Sigmoid colon (tissue), 7 donors: ENCODE measurements at regions of chr3 and their contacts with region 1.

Region 1: DNA sequence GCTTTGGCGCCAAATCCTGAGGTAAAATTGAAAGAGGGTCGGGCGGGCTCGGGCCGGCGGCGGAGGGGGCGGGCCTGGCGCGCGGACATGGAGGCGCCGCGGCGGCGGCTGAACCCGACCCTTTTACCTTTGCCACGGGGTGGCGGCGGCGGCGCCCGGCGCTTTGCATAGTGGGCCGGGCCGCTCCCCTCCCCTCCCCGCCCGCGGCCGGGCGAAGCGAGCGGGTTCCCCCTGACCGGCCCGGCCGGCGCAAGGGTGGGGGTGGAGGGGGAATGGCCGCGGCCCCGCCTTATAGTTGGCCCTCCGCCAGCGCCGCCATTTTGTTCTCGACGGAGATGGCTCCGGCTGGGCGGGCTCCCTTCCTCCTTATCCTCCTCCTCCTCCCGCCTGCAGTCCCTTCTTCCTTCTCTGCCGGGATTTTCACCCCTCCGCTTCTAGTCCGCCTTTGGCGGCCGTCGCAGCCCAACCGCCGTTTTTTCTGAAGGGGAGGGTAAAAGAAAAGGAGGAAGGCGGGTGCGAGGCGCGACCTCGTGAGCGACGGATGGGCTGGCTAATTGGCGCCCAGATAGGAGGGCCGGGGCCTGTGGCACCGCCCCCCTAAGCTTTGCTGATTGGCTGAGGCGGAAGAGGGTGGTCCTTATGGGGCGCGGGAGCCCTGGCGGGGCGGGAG is 638 bp downstream of the NR2C2 start:
- DNase-seq: peak; percentile 98
- H3K4me3 ChIP-seq: peak overlapping the region; percentile 52 to 99 (median 88)
- H3K27ac ChIP-seq: peak overlapping the region; percentile 92 to 100 (median 96)
- H3K4me1 ChIP-seq: peaks cover 0 to 54% (median 39%) of the 10 kb centered on the region in 4 donors
- H3K27me3 ChIP-seq: no peaks in the 10 kb centered on the region
- CTCF ChIP-seq: no peak
- EP300 ChIP-seq: no peak
- POLR2A ChIP-seq: no peak

Region 2: GRCh38 chr3:14124615-14125190 is 823.3 kb before region 1 on chr3 and contains the starts of genes CHCHD4 and TMEM43:
- intact Hi-C with region 1: loop called (anchors 10 kb)
- DNase-seq: peak; percentile 100
- H3K4me3 ChIP-seq: peak within 1 kb of the TSS; percentile 68 to 96 (median 87)
- H3K27ac ChIP-seq: peak within 1 kb of the TSS; percentile 86 to 97 (median 94)
- H3K4me1 ChIP-seq: peaks cover 0 to 49% (median 38%) of the 10 kb centered on the region in 4 donors
- H3K27me3 ChIP-seq: no peaks in the 10 kb centered on the region
- CTCF ChIP-seq: no peak
- EP300 ChIP-seq: peak in 1 of 4 donors; percentile 53
- POLR2A ChIP-seq: peak; percentile 62 to 71
- total RNA-seq, gene CHCHD4: 13.0 to 33.1 (median 26.3) TPM
- total RNA-seq, gene TMEM43: 68.0 to 88.3 (median 80.2) TPM

Region 3: GRCh38 chr3:14178247-14179113 is 769.5 kb before region 1 on chr3 and contains the starts of genes LSM3 and XPC:
- intact Hi-C with region 1: loop called (anchors 10 kb)
- DNase-seq: peak; percentile 99
- H3K4me3 ChIP-seq: peak within 1 kb of the TSS; percentile 62 to 89 (median 76)
- H3K27ac ChIP-seq: peak within 1 kb of the TSS; percentile 89 to 99 (median 96)
- H3K4me1 ChIP-seq: peaks cover 0 to 32% (median 29%) of the 10 kb centered on the region in 4 donors
- H3K27me3 ChIP-seq: no peaks in the 10 kb centered on the region
- CTCF ChIP-seq: no peak
- EP300 ChIP-seq: peak in 1 of 4 donors; percentile 86
- POLR2A ChIP-seq: peak; percentile 85 to 91
- total RNA-seq, gene LSM3: 8.0 to 17.1 (median 14.9) TPM
- total RNA-seq, gene XPC: 30.3 to 37.5 (median 32.6) TPM

Region 4: GRCh38 chr3:14329116-14329830 is 618.7 kb before region 1 on chr3:
- intact Hi-C with region 1: no loop called
- DNase-seq: no peak
- H3K4me3 ChIP-seq: no peak overlapping the region
- H3K27ac ChIP-seq: no peak overlapping the region
- H3K4me1 ChIP-seq: no peaks in the 10 kb centered on the region
- H3K27me3 ChIP-seq: no peaks in the 10 kb centered on the region
- CTCF ChIP-seq: no peak
- EP300 ChIP-seq: no peak
- POLR2A ChIP-seq: no peak

Region 5: GRCh38 chr3:14570089-14570488 is 377.9 kb before region 1 on chr3:
- intact Hi-C with region 1: no loop called
- DNase-seq: no peak
- H3K4me3 ChIP-seq: no peak overlapping the region
- H3K27ac ChIP-seq: no peak overlapping the region
- H3K4me1 ChIP-seq: no peaks in the 10 kb centered on the region
- H3K27me3 ChIP-seq: peaks cover 0 to 10% (median 0%) of the 10 kb centered on the region in 3 donors
- CTCF ChIP-seq: no peak
- EP300 ChIP-seq: no peak
- POLR2A ChIP-seq: no peak

Region 6: GRCh38 chr3:15064835-15065549 is 117.0 kb after region 1 on chr3 and contains the start of gene MRPS25:
- intact Hi-C with region 1: loop called (anchors 2 kb)
- DNase-seq: peak; percentile 95
- H3K4me3 ChIP-seq: peak within 1 kb of the TSS; percentile 64 to 76 (median 69)
- H3K27ac ChIP-seq: peak within 1 kb of the TSS; percentile 80 to 86 (median 84)
- H3K4me1 ChIP-seq: peaks cover 0 to 23% (median 16%) of the 10 kb centered on the region in 4 donors
- H3K27me3 ChIP-seq: no peaks in the 10 kb centered on the region
- CTCF ChIP-seq: no peak
- EP300 ChIP-seq: peak in 1 of 4 donors; percentile 54
- POLR2A ChIP-seq: peak; percentile 64 to 90
- total RNA-seq, gene MRPS25: 25.8 to 44.5 (median 33.1) TPM

Region 7: GRCh38 chr3:15098503-15099363 is 150.7 kb after region 1 on chr3 and contains the start of gene RBSN:
- intact Hi-C with region 1: loop called (anchors 1 kb)
- DNase-seq: peak; percentile 97
- H3K4me3 ChIP-seq: peak within 1 kb of the TSS; percentile 72 to 84 (median 78)
- H3K27ac ChIP-seq: peak within 1 kb of the TSS; percentile 84 to 89 (median 86)
- H3K4me1 ChIP-seq: peaks cover 0 to 49% (median 30%) of the 10 kb centered on the region in 4 donors
- H3K27me3 ChIP-seq: no peaks in the 10 kb centered on the region
- CTCF ChIP-seq: no peak
- EP300 ChIP-seq: peak in 1 of 4 donors; percentile 19
- POLR2A ChIP-seq: peak; percentile 87 to 89
- total RNA-seq, gene RBSN: 29.1 to 41.3 (median 38.0) TPM